Endothelial cell of umbilical vein (primary cell): ENCODE measurements at regions of chr14 and their contacts with region 1.

Region 1: DNA sequence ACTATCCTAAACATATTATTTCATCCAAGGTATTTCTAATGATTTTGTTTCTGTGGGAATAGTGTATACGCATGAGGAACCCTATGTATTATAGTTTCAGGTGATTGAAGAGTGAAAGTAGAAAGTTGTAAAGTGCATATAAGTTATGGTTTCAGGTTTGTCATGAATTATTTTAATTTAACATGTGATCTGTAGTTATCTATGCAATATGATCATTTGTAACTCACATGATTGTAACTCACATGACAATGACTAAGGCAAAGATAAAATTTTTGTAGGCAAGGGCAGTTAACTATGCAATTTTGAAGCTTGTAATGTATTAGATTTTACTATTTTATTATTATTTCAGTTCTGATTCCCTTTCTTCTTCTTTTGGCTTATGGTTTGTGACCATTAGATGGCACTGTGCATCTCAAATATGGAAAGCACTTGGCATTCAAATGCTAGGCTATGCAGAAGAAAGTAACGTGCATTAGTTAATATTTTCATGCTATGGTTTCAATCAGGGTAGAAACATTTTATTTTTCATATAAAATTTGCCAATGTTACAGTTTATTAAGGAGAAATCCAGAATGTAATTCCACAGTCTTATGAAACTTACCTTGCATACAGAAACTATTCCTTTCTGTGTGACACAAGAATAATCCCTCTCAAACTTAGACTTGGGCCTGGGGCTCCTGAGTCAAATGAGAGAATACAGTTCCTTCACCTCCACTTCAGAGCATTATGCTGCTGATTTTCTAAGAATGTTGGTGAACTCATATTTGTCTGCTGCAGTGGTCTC is 15.8 kb upstream of the TMEM30B start:
- DNase-seq: peak; percentile 77
- H3K4me3 ChIP-seq: no peak overlapping the region
- H3K27ac ChIP-seq: peak overlapping the region; percentile 47
- H3K4me1 ChIP-seq: peaks cover 29% of the 10 kb centered on the region
- H3K27me3 ChIP-seq: no peaks in the 10 kb centered on the region
- CTCF ChIP-seq: peak; percentile 40 to 51
- POLR2A ChIP-seq: no peak

Region 2: DNA sequence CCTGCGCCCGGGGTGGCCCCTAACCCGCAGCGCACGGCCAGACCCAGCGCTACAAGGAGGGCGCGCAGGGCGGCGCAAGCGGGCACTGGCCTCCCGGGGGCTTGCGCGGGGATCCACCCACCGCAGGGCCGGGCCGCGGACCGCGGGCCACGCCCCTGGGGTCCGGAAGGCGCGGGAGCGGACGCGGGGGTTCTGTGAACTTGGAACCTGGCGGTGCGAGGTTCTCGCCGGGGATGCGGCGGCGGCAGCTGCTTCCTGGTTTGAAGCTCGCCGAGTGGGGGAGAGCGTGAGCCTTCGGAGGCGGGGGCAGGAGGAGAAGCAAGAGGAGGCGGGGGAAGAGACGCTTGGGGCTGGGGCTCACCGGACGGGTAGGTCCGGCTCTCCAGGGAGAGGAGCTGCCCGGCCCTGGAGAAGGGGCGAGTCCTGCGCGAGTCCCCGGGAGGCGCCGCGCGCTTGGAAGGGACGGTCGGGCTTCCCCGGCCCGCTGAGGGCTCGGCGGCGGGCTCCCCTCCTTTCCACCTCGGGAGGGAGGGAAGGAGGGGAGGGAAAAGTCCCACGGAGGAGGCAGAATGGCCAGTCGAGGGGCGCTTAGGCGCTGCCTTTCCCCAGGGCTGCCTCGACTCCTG is 24.6 kb after region 1 on chr14 and contains the start of gene PRKCH:
- CTCF ChIA-PET with region 1: interaction called, 23 read pairs
- POLR2A ChIA-PET with region 1: no interaction called
- dilution Hi-C with region 1: no loop called
- intact Hi-C with region 1: loop called (anchors 1 kb)
- DNase-seq: peak; percentile 92
- H3K4me3 ChIP-seq: peak within 1 kb of the TSS; percentile 55 to 90 (median 68)
- H3K27ac ChIP-seq: peak within 1 kb of the TSS; percentile 66
- H3K4me1 ChIP-seq: peaks cover 23% of the 10 kb centered on the region
- H3K27me3 ChIP-seq: no peaks in the 10 kb centered on the region
- CTCF ChIP-seq: peak; percentile 12 to 40
- POLR2A ChIP-seq: peak; percentile 49
- total RNA-seq, gene PRKCH: 101 and 103 TPM in 2 replicates

Region 3: DNA sequence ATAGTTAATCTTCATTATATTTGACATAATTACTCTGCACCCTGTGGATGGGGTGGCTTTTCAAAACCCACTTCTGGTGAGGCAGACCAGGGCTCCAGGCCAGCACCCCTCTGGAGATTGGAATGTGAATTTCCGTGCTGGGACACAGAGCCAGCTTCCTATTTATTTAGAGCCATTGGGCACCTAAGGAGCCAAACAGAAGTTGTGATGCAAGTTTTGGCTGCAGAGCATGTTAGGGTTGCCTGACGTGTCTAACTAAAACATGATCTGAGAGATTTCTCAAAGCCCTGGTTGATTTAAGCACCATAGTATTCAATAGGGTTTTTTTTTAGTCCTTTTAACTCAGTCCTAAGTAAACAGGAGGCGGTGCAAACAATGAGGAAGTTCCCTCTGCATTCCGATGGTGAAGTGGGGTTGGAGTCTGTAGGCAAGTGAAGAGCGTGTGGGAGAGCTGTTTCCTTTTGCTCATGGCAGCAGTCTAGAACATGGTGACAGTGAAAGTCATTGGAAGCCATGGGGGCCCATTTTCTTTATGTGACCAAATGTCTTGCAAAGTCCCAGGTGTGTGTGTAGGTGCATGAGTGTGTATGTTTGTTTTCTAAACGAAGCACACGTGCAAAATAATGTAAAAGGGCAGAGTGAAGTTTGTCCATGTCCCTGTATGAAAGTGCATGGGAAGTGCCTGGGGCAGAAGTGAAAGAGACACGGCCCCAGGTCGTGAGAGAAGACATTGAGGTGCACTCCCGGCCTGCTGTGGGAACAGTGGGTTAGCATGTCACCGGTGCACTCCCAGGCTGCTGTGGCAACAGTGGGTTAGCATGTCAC is 142.2 kb after region 1 on chr14:
- CTCF ChIA-PET with region 1: interaction called, 6 read pairs
- POLR2A ChIA-PET with region 1: no interaction called
- dilution Hi-C with region 1: no loop called
- intact Hi-C with region 1: loop called (anchors 5 kb)
- DNase-seq: peak; percentile 91
- H3K4me3 ChIP-seq: peak overlapping the region in 1 of 3 experiments; percentile 0
- H3K27ac ChIP-seq: peak overlapping the region; percentile 39
- H3K4me1 ChIP-seq: peaks cover 43% of the 10 kb centered on the region
- H3K27me3 ChIP-seq: no peaks in the 10 kb centered on the region
- CTCF ChIP-seq: no peak
- POLR2A ChIP-seq: peak; percentile 25

Region 4: GRCh38 chr14:61461808-61462275 is 164.9 kb after region 1 on chr14:
- CTCF ChIA-PET with region 1: interaction called, 13 read pairs
- POLR2A ChIA-PET with region 1: no interaction called
- dilution Hi-C with region 1: loop called (anchors 25 kb)
- intact Hi-C with region 1: loop called (anchors 1 kb)
- DNase-seq: peak; percentile 80
- H3K4me3 ChIP-seq: no peak overlapping the region
- H3K27ac ChIP-seq: no peak overlapping the region
- H3K4me1 ChIP-seq: peaks cover 26% of the 10 kb centered on the region
- H3K27me3 ChIP-seq: no peaks in the 10 kb centered on the region
- CTCF ChIP-seq: peak; percentile 35 to 43
- POLR2A ChIP-seq: no peak

Region 5: GRCh38 chr14:61837336-61838229 is 540.7 kb after region 1 on chr14:
- CTCF ChIA-PET with region 1: interaction called, 8 read pairs
- POLR2A ChIA-PET with region 1: no interaction called
- dilution Hi-C with region 1: no loop called
- intact Hi-C with region 1: loop called (anchors 1 kb)
- DNase-seq: peak; percentile 84
- H3K4me3 ChIP-seq: no peak overlapping the region
- H3K27ac ChIP-seq: peak overlapping the region; percentile 72
- H3K4me1 ChIP-seq: peaks cover 34% of the 10 kb centered on the region
- H3K27me3 ChIP-seq: no peaks in the 10 kb centered on the region
- CTCF ChIP-seq: peak; percentile 85
- POLR2A ChIP-seq: no peak